Dendritic cell treated with granulocyte-macrophage colony-stimulating factor and Interleukin-4, amounts not matched to agents 40 ng/mL and 50 ng/mL, for 4 days (primary cell): ENCODE measurements at regions of chr15 and their contacts with region 1.

Region 1: GRCh38 chr15:71011503-71012155 is 103.6 kb upstream of the THSD4 start:
- H3K4me3 Mint-ChIP-seq: no peak overlapping the region
- H3K27ac Mint-ChIP-seq: no peak overlapping the region
- H3K4me1 Mint-ChIP-seq: no peaks in the 10 kb centered on the region
- H3K27me3 Mint-ChIP-seq: no peaks in the 10 kb centered on the region

Region 2: DNA sequence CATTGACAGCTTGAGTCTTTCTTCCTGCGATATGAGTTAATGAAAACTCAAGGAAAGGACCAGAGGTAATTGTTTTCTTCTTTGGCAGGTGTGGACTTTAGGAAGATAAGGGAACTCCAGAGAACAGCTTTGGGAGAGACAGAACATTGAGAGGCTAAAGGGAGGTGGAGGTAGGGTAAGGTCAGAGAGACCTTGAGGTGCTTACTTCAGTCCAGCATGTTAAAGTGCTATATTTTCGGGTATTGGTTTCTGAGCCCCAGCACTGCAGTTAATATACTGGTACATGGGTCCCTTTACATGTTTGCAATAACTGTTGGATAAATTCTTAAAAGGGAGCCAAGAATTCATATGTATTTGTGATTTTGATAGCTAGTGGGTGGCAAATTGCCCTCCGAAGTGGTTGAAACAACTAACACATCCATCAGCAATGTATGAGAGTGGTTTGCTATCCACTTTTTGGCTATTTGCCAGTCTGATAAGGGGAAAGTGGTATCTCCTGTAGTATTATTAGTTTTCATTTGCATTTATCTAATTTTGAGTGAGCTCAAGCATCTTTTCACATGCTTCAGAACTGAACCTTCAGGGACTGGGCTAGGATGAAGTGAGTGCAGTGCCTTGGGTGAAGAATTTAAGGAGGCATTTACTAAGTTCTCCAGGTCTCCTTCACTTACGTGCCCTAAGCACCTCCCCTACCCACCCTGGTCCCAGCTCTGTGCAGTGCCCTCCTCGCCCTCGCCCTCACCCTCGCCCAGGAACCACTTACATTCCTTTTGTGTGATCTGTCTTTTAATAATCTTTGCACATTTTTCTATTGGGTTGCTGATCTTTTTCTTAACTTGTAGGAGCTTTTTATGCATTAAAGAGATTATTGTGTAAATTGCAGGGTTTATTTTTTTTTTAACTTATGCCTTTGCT is 426.0 kb after region 1 on chr15:
- intact Hi-C with region 1: loop called (anchors 10 kb)
- H3K4me3 Mint-ChIP-seq: no peak overlapping the region
- H3K27ac Mint-ChIP-seq: no peak overlapping the region
- H3K4me1 Mint-ChIP-seq: peaks cover 2% of the 10 kb centered on the region
- H3K27me3 Mint-ChIP-seq: peaks cover 6% of the 10 kb centered on the region

Region 3: DNA sequence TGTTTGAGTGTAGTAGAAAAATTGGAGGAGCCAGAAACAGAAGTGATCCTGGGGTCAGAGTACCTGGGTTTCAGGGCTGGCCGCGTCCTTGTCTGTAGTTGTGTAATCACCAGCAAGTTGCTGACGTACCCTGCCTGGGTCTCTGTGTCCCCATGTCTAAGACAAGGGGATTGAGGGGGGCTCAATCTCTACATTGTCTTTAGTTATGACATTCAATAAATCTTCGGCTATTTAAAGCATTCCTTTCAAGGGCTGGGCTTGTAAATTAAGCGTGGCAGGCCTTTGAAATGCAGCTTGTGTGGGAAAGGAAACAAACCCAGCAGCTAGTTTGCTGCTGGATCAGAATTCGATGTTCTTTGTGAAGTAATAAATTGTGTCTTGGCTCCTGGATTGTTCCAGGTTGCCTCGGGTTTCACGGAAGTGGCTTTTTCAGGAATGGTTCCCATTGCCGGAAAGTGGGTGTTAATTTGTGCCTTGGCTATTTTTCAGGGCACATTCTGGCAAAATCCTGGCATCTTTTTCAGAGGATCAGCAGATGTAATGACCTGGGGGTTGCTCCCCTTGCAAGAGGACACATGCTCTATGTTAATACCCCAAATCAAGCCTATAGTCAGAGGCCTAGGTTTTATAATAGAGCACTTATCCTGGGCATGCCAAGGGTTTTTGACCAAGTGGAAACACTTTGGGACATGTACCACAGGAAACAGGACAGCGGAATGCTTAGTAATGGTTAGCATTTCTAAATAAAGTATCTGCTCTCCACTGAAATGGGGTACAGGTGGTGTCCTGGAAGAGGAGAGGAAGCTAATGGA is 504.0 kb after region 1 on chr15:
- intact Hi-C with region 1: no loop called
- H3K4me3 Mint-ChIP-seq: no peak overlapping the region
- H3K27ac Mint-ChIP-seq: no peak overlapping the region
- H3K4me1 Mint-ChIP-seq: no peaks in the 10 kb centered on the region
- H3K27me3 Mint-ChIP-seq: peaks cover 8% of the 10 kb centered on the region